ENCODE measurements at regions of chr2 and their contacts with region 1.

Region 1: GRCh38 chr2:152861349-152861942 is 143.0 kb downstream of the ARL6IP6 start:
- DNase-seq: peak; percentile 28
- H3K4me3 ChIP-seq: no peak overlapping the region
- H3K27ac ChIP-seq: no peak overlapping the region
- H3K4me1 ChIP-seq: no peaks in the 10 kb centered on the region
- H3K27me3 ChIP-seq: no peaks in the 10 kb centered on the region
- CTCF ChIP-seq: peak; percentile 63

Region 2: DNA sequence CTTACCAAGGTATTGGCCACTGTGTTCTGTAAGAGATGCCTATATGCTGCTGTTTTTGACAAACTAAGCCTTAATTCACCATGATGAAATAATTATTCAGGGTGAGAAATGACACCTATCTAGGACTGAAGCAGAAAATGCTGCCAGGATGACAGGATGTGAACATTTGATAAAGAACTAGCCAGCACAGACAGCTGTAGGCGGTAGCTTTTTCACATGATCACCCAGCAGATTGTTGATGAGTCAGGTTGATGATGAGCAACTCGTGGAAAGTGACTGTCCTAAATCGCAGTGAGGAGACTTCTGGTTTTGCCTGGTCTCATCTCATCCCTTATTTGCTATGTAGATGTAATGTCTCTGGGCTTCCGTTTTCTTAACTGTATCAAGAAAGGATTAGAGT is 288.3 kb before region 1 on chr2:
- intact Hi-C with region 1: no loop called
- DNase-seq: no peak
- H3K4me3 ChIP-seq: no peak overlapping the region
- H3K27ac ChIP-seq: no peak overlapping the region
- H3K4me1 ChIP-seq: no peaks in the 10 kb centered on the region
- H3K27me3 ChIP-seq: no peaks in the 10 kb centered on the region
- CTCF ChIP-seq: no peak

Region 3: DNA sequence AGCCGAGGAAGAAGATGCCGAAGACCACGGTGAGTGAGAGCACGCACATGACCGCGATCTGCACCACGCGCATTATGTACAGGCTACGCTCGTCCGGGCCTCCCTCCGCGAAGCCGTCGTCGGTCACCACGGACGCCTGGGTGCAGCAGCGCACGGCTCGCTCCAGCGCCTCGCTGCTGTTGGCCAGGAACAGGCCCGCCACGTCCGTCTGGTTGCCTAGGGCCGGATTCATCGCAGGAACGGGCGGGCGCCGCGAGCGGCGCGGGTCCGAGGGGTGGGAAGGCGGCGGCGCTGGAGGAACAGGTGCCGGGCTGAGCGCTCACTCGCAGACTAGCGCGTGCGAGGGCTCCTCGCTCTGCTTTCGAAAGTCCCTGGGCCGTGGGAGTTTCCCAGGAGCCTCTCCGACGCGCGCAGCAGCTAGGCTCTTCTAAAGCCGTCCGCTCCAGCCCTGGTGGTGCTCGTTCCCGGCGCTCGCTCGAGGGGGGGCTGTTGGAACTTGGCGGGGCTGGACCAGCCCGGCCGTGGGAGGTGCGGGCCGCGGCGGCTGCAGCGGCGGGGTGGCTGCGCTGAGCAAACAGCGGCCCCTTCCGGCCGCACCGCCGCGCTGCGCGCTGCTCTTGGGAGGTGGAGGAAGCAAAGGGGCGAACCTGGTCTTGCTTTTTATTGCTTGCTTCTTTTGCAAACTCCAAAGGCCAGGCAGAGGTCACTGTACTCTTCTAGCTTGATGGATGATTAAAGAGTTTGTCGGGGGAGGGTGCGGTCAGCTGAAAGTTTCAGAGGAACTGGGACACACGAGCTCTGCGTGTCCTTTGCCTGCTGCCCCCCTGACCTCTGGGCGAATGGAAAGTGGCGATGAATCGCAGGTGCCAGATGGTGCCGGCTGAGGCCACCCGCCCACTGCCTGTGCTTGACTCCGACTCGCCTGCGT is 617.2 kb after region 1 on chr2 and contains the start of gene RPRM:
- intact Hi-C with region 1: loop called (anchors 2 kb)
- DNase-seq: peak; percentile 65
- H3K4me3 ChIP-seq: peak within 1 kb of the TSS; percentile 43
- H3K27ac ChIP-seq: no peak within 1 kb of the TSS
- H3K4me1 ChIP-seq: peaks cover 10% of the 10 kb centered on the region
- H3K27me3 ChIP-seq: peaks cover 29% of the 10 kb centered on the region
- CTCF ChIP-seq: peak; percentile 77
- total RNA-seq, gene RPRM: 0.88 TPM in 1 of 2 donors, not detected in the other